Naive thymus-derived CD4-positive, alpha-beta T cell (primary cell): ENCODE measurements at regions of chr12 and their contacts with region 1.

Region 1: GRCh38 chr12:6752921-6753771 is at the start of gene MLF2:
- DNase-seq: peak; percentile 95 to 99 (median 97)
- ATAC-seq: peak; percentile 93
- H3K4me3 ChIP-seq: peak within 1 kb of the TSS; percentile 99
- H3K4me3 Mint-ChIP-seq: peak within 1 kb of the TSS; percentile 91 to 97 (median 96)
- H3K27ac ChIP-seq: peak within 1 kb of the TSS; percentile 97
- H3K27ac Mint-ChIP-seq: peak within 1 kb of the TSS; percentile 97 to 100 (median 99)
- H3K4me1 ChIP-seq: peaks cover 0 to 12% of the 10 kb centered on the region in 2 donors
- H3K4me1 Mint-ChIP-seq: peaks cover 10 to 44% (median 23%) of the 10 kb centered on the region in 7 donors
- H3K27me3 ChIP-seq: no peaks in the 10 kb centered on the region
- H3K27me3 Mint-ChIP-seq: no peaks in the 10 kb centered on the region
- total RNA-seq, gene MLF2: 84.6 to 141 (median 117) TPM

Region 2: GRCh38 chr12:6307529-6307928 is 445.6 kb before region 1 on chr12:
- CTCF ChIA-PET with region 1: no interaction called
- POLR2A ChIA-PET with region 1: no interaction called
- intact Hi-C with region 1: no loop called
- DNase-seq: no peak
- ATAC-seq: peak; percentile 50
- H3K4me3 ChIP-seq: no peak overlapping the region
- H3K4me3 Mint-ChIP-seq: no peak overlapping the region
- H3K27ac ChIP-seq: no peak overlapping the region
- H3K27ac Mint-ChIP-seq: no peak overlapping the region
- H3K4me1 ChIP-seq: no peaks in the 10 kb centered on the region
- H3K4me1 Mint-ChIP-seq: peaks cover 0 to 4% (median 0%) of the 10 kb centered on the region in 7 donors
- H3K27me3 ChIP-seq: peaks cover 0 to 7% of the 10 kb centered on the region in 2 donors
- H3K27me3 Mint-ChIP-seq: peaks cover 6 to 47% (median 8%) of the 10 kb centered on the region in 5 donors

Region 3: GRCh38 chr12:6607751-6608591 is 145.2 kb before region 1 on chr12:
- CTCF ChIA-PET with region 1: interaction called, 4 read pairs
- POLR2A ChIA-PET with region 1: interaction called, 7 read pairs
- intact Hi-C with region 1: loop called (anchors 1 kb)
- DNase-seq: peak in 8 of 9 donors; percentile 56 to 81 (median 71)
- ATAC-seq: peak; percentile 49
- H3K4me3 ChIP-seq: no peak overlapping the region
- H3K4me3 Mint-ChIP-seq: no peak overlapping the region
- H3K27ac ChIP-seq: peak overlapping the region; percentile 96
- H3K27ac Mint-ChIP-seq: no peak overlapping the region
- H3K4me1 ChIP-seq: peaks cover 46 to 47% of the 10 kb centered on the region in 2 donors
- H3K4me1 Mint-ChIP-seq: peaks cover 48 to 55% (median 51%) of the 10 kb centered on the region in 7 donors
- H3K27me3 ChIP-seq: no peaks in the 10 kb centered on the region
- H3K27me3 Mint-ChIP-seq: no peaks in the 10 kb centered on the region

Region 4: DNA sequence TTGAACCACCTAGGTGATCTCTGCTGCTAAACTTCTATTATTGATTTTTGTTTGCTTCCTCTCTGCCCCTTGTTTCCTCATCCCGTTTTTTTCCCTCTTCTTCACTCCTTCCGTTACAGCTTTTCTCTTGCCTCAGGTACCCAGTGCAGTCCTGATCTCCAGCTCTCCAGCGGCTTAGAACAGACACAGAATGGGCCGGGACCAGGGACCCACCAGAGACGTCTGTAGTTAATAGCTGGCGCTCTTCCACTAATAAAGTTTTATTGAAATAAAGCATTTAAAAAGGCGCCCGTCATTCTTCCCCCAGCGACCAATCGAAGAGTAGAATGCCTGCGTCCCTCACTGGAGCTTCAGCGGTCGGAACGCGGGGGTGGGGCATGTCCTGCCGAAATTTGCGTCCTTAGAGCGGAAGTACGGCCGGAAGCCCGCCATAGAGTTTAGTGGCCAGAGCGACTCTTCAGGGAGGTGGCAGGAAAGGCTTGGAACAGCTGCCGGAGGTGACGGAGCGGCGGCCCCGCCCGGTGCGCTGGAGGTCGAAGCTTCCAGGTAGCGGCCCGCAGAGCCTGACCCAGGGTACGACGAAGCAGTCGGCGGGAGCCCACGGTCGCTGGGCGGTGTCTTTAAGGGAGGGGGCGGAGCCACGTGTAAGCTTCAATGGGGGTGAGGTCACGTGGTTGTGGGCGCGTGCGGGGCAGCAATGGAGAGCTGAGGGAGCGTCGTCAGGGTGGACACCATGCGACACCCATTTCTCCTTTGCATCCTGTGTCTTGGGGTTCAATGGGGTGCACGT is 29.3 kb before region 1 on chr12 and contains the start of gene COPS7A:
- CTCF ChIA-PET with region 1: interaction called, 6 read pairs
- POLR2A ChIA-PET with region 1: interaction called, 38 read pairs
- intact Hi-C with region 1: loop called (anchors 1 kb)
- DNase-seq: peak; percentile 77 to 94 (median 90)
- ATAC-seq: peak; percentile 93
- H3K4me3 ChIP-seq: peak within 1 kb of the TSS; percentile 63
- H3K4me3 Mint-ChIP-seq: peak within 1 kb of the TSS; percentile 80 to 97 (median 92)
- H3K27ac ChIP-seq: peak within 1 kb of the TSS; percentile 75
- H3K27ac Mint-ChIP-seq: peak within 1 kb of the TSS; percentile 90 to 98 (median 96)
- H3K4me1 ChIP-seq: peaks cover 10 to 11% of the 10 kb centered on the region in 2 donors
- H3K4me1 Mint-ChIP-seq: peaks cover 24 to 34% (median 27%) of the 10 kb centered on the region in 7 donors
- H3K27me3 ChIP-seq: no peaks in the 10 kb centered on the region
- H3K27me3 Mint-ChIP-seq: no peaks in the 10 kb centered on the region
- total RNA-seq, gene COPS7A: 21.9 to 38.7 (median 30.1) TPM

Region 5: GRCh38 chr12:6778574-6779550 is 25.7 kb after region 1 on chr12:
- CTCF ChIA-PET with region 1: interaction called, 48 read pairs
- POLR2A ChIA-PET with region 1: interaction called, 40 read pairs
- intact Hi-C with region 1: loop called (anchors 1 kb)
- DNase-seq: peak; percentile 73 to 88 (median 84)
- ATAC-seq: peak; percentile 95
- H3K4me3 ChIP-seq: peak overlapping the region; percentile 69
- H3K4me3 Mint-ChIP-seq: peak overlapping the region; percentile 85 to 94 (median 87)
- H3K27ac ChIP-seq: peak overlapping the region; percentile 27
- H3K27ac Mint-ChIP-seq: peak overlapping the region; percentile 75 to 96 (median 86)
- H3K4me1 ChIP-seq: peaks cover 18 to 56% of the 10 kb centered on the region in 2 donors
- H3K4me1 Mint-ChIP-seq: peaks cover 36 to 77% (median 60%) of the 10 kb centered on the region in 7 donors
- H3K27me3 ChIP-seq: no peaks in the 10 kb centered on the region
- H3K27me3 Mint-ChIP-seq: peaks cover 0 to 15% (median 5%) of the 10 kb centered on the region in 5 donors

Region 6: GRCh38 chr12:6833189-6833890 is 80.2 kb after region 1 on chr12:
- CTCF ChIA-PET with region 1: interaction called, 38 read pairs
- POLR2A ChIA-PET with region 1: interaction called, 91 read pairs
- intact Hi-C with region 1: loop called in 1 of 2 experiments (anchors 1 kb)
- DNase-seq: no peak
- ATAC-seq: no peak
- H3K4me3 ChIP-seq: no peak overlapping the region
- H3K4me3 Mint-ChIP-seq: no peak overlapping the region
- H3K27ac ChIP-seq: no peak overlapping the region
- H3K27ac Mint-ChIP-seq: no peak overlapping the region
- H3K4me1 ChIP-seq: peaks cover 0 to 4% of the 10 kb centered on the region in 2 donors
- H3K4me1 Mint-ChIP-seq: peaks cover 0 to 16% (median 12%) of the 10 kb centered on the region in 7 donors
- H3K27me3 ChIP-seq: peaks cover 0 to 4% of the 10 kb centered on the region in 2 donors
- H3K27me3 Mint-ChIP-seq: peaks cover 0 to 32% (median 0%) of the 10 kb centered on the region in 5 donors

Region 7: GRCh38 chr12:6937481-6938297 is 184.5 kb after region 1 on chr12:
- CTCF ChIA-PET with region 1: no interaction called
- POLR2A ChIA-PET with region 1: interaction called, 3 read pairs
- intact Hi-C with region 1: loop called in 1 of 2 experiments (anchors 1 kb)
- DNase-seq: peak; percentile 81 to 96 (median 93)
- ATAC-seq: peak; percentile 97
- H3K4me3 ChIP-seq: peak overlapping the region; percentile 90
- H3K4me3 Mint-ChIP-seq: peak overlapping the region; percentile 75 to 88 (median 84)
- H3K27ac ChIP-seq: peak overlapping the region; percentile 92
- H3K27ac Mint-ChIP-seq: peak overlapping the region; percentile 91 to 99 (median 96)
- H3K4me1 ChIP-seq: peaks cover 5 to 29% of the 10 kb centered on the region in 2 donors
- H3K4me1 Mint-ChIP-seq: peaks cover 41 to 67% (median 51%) of the 10 kb centered on the region in 7 donors
- H3K27me3 ChIP-seq: no peaks in the 10 kb centered on the region
- H3K27me3 Mint-ChIP-seq: no peaks in the 10 kb centered on the region